GM12878 (cell line): ENCODE measurements at regions of chr6 and their contacts with region 1.

Region 1: GRCh38 chr6:79813854-79814709 is 133.3 kb downstream of the ELOVL4 start:
- DNase-seq: peak; percentile 16
- ATAC-seq: peak; percentile 96
- H3K4me3 ChIP-seq: no peak overlapping the region
- H3K27ac ChIP-seq: no peak overlapping the region
- H3K4me1 ChIP-seq: no peaks in the 10 kb centered on the region
- H3K27me3 ChIP-seq: no peaks in the 10 kb centered on the region
- CTCF ChIP-seq: peak; percentile 82 to 84 (median 83)
- EP300 ChIP-seq: no peak
- POLR2A ChIP-seq: no peak
- RAD21 ChIP-seq: peak; percentile 75

Region 2: GRCh38 chr6:79737172-79737571 is 76.9 kb before region 1 on chr6:
- CTCF ChIA-PET with region 1: no interaction called
- POLR2A ChIA-PET with region 1: no interaction called
- RAD21 ChIA-PET with region 1: no interaction called
- SMC1A ChIA-PET with region 1: no interaction called
- in situ Hi-C with region 1: no loop called
- intact Hi-C with region 1: no loop called
- DNase-seq: no peak
- ATAC-seq: no peak
- H3K4me3 ChIP-seq: no peak overlapping the region
- H3K27ac ChIP-seq: no peak overlapping the region
- H3K4me1 ChIP-seq: no peaks in the 10 kb centered on the region
- H3K27me3 ChIP-seq: no peaks in the 10 kb centered on the region
- CTCF ChIP-seq: no peak
- EP300 ChIP-seq: no peak
- POLR2A ChIP-seq: no peak
- RAD21 ChIP-seq: no peak

Region 3: GRCh38 chr6:79833264-79833963 is 19.3 kb after region 1 on chr6:
- CTCF ChIA-PET with region 1: interaction called, 10 read pairs
- POLR2A ChIA-PET with region 1: no interaction called
- RAD21 ChIA-PET with region 1: no interaction called
- SMC1A ChIA-PET with region 1: no interaction called
- in situ Hi-C with region 1: no loop called
- intact Hi-C with region 1: no loop called
- DNase-seq: no peak
- ATAC-seq: no peak
- H3K4me3 ChIP-seq: no peak overlapping the region
- H3K27ac ChIP-seq: no peak overlapping the region
- H3K4me1 ChIP-seq: no peaks in the 10 kb centered on the region
- H3K27me3 ChIP-seq: no peaks in the 10 kb centered on the region
- CTCF ChIP-seq: no peak
- EP300 ChIP-seq: no peak
- POLR2A ChIP-seq: no peak
- RAD21 ChIP-seq: no peak